Gastrocnemius medialis (tissue), 4 donors: ENCODE measurements at regions of chr5 and their contacts with region 1.

Region 1: DNA sequence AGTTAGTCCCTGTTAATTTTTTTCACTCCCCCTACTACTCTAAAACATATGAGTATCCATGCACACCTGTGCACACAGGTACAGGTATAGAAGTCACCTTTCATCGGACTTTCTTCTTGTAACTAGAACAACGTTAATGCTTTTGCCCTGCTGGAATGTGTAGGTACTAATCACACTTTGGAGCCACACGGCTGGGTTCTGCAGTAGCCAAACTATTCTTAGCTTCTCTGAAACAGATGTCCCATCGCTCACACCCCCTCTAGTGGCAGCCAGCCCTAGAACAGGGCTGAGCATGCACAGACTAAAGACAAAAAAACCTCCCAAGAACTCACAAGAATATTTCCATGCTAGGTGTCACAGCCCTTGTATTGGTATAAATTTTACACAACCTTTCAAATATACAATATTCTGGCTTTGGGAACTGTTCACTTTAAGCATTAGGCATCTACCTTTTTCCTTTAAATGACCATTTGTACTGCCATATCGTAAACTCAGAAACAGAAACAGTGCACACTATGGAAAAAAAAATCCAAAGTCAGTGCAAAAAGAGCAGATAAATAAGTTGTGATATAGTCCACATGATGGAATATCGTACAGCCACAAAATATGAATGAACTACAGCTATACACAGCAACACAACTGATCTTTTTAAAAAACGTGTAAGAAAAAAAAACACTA is 64.0 kb downstream of the RETREG1 start:
- DNase-seq: peak; percentile 75 to 86
- ATAC-seq: peak; percentile 67 to 81
- H3K4me3 ChIP-seq: no peak overlapping the region
- H3K27ac ChIP-seq: peak overlapping the region; percentile 90 to 97 (median 94)
- H3K4me1 ChIP-seq: peaks cover 22 to 25% of the 10 kb centered on the region in 2 donors
- H3K27me3 ChIP-seq: no peaks in the 10 kb centered on the region
- CTCF ChIP-seq: peak; percentile 75 to 84 (median 81)
- POLR2A ChIP-seq: no peak

Region 2: GRCh38 chr5:16465544-16466466 is 87.0 kb before region 1 on chr5 and contains the start of gene ZNF622:
- in situ Hi-C with region 1: no loop called
- intact Hi-C with region 1: loop called (anchors 2 kb)
- DNase-seq: peak; percentile 87 to 91
- ATAC-seq: peak; percentile 51 to 74
- H3K4me3 ChIP-seq: peak within 1 kb of the TSS; percentile 78 to 97 (median 92)
- H3K27ac ChIP-seq: peak within 1 kb of the TSS; percentile 87 to 94 (median 92)
- H3K4me1 ChIP-seq: peaks cover 84 to 85% of the 10 kb centered on the region in 2 donors
- H3K27me3 ChIP-seq: no peaks in the 10 kb centered on the region
- CTCF ChIP-seq: no peak
- POLR2A ChIP-seq: peak; percentile 92 to 96
- total RNA-seq, gene ZNF622: 44.8 to 150 (median 75.1) TPM